ENCODE measurements at regions of chr5 and their contacts with region 1.

Region 1: DNA sequence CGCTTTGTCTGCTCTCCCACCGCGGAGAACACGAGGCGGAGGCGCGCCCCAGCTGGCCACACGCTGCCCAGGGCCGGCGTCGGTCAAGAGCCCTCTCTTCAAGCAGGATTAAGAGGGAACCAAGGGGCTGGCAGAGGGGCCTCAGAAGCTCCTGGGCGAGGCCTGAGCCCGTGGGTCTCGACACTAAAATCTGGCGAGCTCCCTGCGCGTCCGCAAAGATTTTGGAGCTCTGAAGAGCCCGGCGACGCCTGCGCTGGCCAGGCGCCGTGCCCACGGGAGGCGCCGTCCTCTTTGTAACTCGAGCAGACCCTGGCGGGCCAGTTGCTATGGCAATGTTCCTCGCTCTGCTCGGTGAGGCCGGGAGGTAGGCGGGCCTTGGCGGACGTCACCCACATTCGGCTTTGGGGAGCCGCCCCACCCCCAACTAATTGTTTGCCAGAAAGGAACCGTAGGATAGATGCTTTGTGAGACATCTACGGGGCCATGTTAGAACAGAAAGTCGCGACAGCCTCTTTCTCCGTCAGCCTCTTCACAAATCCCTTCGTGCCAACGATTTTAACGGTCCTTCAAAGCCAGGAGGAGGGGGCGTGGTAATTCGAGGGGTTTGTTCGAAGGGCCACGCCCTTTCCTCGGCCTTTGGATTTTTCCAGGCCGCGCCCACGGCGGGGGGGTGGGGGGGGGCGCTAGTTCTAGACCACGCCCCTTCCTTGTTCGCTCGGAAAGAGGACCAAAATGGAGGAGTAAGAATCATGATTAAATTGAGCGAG is 714 bp upstream of the CNOT8 start:
- DNase-seq: peak; percentile 94 to 97 (median 96)
- ATAC-seq: peak; percentile 68 to 84 (median 81)
- H3K4me3 ChIP-seq: peak overlapping the region; percentile 61 to 97 (median 82)
- H3K27ac ChIP-seq: peak overlapping the region; percentile 92 to 100 (median 98)
- H3K4me1 ChIP-seq: peaks cover 3 to 45% (median 35%) of the 10 kb centered on the region in 12 donors
- H3K27me3 ChIP-seq: no peaks in the 10 kb centered on the region
- CTCF ChIP-seq: peak in 3 of 12 donors; percentile 10 to 35 (median 20)
- POLR2A ChIP-seq: peak in 1 of 2 donors; percentile 72

Region 2: DNA sequence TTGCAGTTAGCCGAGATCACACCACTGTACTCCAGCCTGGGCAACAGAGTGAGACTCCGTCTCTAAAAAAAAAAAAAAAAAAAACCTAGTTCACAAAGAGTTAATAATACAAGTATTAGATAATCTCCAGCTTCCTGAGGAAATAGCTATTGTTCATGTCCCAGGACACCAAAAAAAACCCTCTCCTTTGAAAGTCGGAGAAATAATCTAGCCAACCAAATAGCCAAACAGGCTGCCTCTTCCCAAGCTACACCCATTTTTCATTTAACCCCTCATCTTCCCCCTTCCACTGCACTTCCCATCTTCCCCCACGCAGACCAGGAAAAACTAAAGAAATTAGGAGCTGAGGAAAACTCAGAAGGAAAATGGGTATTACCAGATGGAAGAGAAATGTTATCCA is 24.3 kb after region 1 on chr5:
- intact Hi-C with region 1: loop called in 1 of 10 experiments (anchors 2 kb)
- DNase-seq: no peak
- ATAC-seq: peak in 3 of 4 donors; percentile 52 to 82 (median 52)
- H3K4me3 ChIP-seq: no peak overlapping the region
- H3K27ac ChIP-seq: peak overlapping the region in 10 of 12 donors; percentile 46 to 76 (median 64)
- H3K4me1 ChIP-seq: peaks cover 0 to 15% (median 4%) of the 10 kb centered on the region in 12 donors
- H3K27me3 ChIP-seq: no peaks in the 10 kb centered on the region
- CTCF ChIP-seq: no peak
- POLR2A ChIP-seq: no peak

Region 3: GRCh38 chr5:154940772-154941620 is 83.3 kb after region 1 on chr5 and contains the start of gene MRPL22:
- intact Hi-C with region 1: loop called in 2 of 10 experiments (anchors 2 to 5 kb)
- DNase-seq: peak; percentile 93 to 95 (median 95)
- ATAC-seq: peak; percentile 69 to 81 (median 78)
- H3K4me3 ChIP-seq: peak within 1 kb of the TSS; percentile 51 to 91 (median 76)
- H3K27ac ChIP-seq: peak within 1 kb of the TSS in 11 of 12 donors; percentile 65 to 89 (median 81)
- H3K4me1 ChIP-seq: peaks cover 9 to 53% (median 43%) of the 10 kb centered on the region in 12 donors
- H3K27me3 ChIP-seq: no peaks in the 10 kb centered on the region
- CTCF ChIP-seq: peak in 1 of 12 donors; percentile 15
- POLR2A ChIP-seq: peak in 1 of 2 donors; percentile 65
- total RNA-seq, gene MRPL22: 25.7 to 76.3 (median 58.0) TPM